ENCODE measurements at regions of chr3 and their contacts with region 1.

Region 1: GRCh38 chr3:73432023-73432705 is 192.6 kb downstream of the PDZRN3 start:
- DNase-seq: peak; percentile 28
- H3K4me3 ChIP-seq: no peak overlapping the region
- H3K27ac ChIP-seq: no peak overlapping the region
- H3K4me1 ChIP-seq: no peaks in the 10 kb centered on the region
- H3K27me3 ChIP-seq: no peaks in the 10 kb centered on the region
- CTCF ChIP-seq: peak; percentile 55 to 64

Region 2: GRCh38 chr3:73094125-73094524 is 338.0 kb before region 1 on chr3:
- CTCF ChIA-PET with region 1: no interaction called
- dilution Hi-C with region 1: no loop called
- in situ Hi-C with region 1: loop called in 1 of 2 experiments (anchors 10 kb)
- intact Hi-C with region 1: no loop called
- DNase-seq: peak; percentile 64
- H3K4me3 ChIP-seq: no peak overlapping the region
- H3K27ac ChIP-seq: no peak overlapping the region
- H3K4me1 ChIP-seq: peaks cover 11% of the 10 kb centered on the region
- H3K27me3 ChIP-seq: no peaks in the 10 kb centered on the region
- CTCF ChIP-seq: peak; percentile 50 to 66

Region 3: DNA sequence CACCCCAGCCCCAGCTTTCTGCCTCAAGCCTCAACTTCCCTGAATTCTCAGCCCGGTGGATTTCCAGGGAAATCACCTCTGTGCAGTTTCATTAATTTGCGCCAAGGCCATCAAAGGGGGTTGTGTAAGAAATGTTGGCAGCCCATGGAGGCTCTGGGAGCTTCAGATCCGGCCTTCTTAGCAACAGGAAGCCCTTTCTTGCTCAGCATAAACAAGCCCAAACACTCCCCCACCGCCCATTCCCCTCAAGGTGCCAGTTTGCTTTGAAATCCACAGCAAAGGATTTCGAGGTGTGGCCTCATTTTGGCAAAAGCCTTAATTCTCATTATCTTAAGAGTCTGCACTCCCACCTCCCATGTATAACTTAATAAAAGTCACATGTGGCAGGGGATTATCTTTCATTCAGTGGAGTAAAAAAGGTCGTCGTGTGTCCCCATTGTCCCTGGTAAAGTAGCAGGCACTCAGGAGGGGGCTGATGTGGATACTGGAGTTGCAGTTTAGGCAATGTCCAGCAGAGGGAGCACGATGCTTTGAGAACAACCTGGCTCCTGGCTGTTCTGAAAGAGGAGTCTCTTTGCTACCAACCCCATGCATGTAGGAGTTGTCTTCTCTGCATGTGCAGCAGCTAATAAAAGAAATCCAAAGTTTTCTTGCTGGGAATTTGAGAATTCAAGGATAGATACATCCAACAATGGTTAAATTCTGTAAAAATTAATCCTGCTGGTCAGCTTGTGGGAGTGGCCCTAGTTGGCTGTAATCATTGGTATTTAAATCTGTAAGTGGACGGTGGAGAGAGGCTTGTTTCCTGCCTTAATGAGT is 331.2 kb before region 1 on chr3:
- CTCF ChIA-PET with region 1: no interaction called
- dilution Hi-C with region 1: no loop called
- in situ Hi-C with region 1: loop called (anchors 10 kb)
- intact Hi-C with region 1: loop called (anchors 1 kb)
- DNase-seq: peak; percentile 61
- H3K4me3 ChIP-seq: no peak overlapping the region
- H3K27ac ChIP-seq: no peak overlapping the region
- H3K4me1 ChIP-seq: no peaks in the 10 kb centered on the region
- H3K27me3 ChIP-seq: no peaks in the 10 kb centered on the region
- CTCF ChIP-seq: peak; percentile 94 to 95

Region 4: GRCh38 chr3:73192035-73192738 is 240.0 kb before region 1 on chr3:
- CTCF ChIA-PET with region 1: no interaction called
- dilution Hi-C with region 1: no loop called
- in situ Hi-C with region 1: no loop called
- intact Hi-C with region 1: loop called (anchors 1 kb)
- DNase-seq: no peak
- H3K4me3 ChIP-seq: no peak overlapping the region
- H3K27ac ChIP-seq: no peak overlapping the region
- H3K4me1 ChIP-seq: no peaks in the 10 kb centered on the region
- H3K27me3 ChIP-seq: no peaks in the 10 kb centered on the region
- CTCF ChIP-seq: peak; percentile 11 to 32

Region 5: GRCh38 chr3:73915886-73916285 is 483.7 kb after region 1 on chr3:
- CTCF ChIA-PET with region 1: no interaction called
- dilution Hi-C with region 1: no loop called
- in situ Hi-C with region 1: no loop called
- intact Hi-C with region 1: no loop called
- DNase-seq: no peak
- H3K4me3 ChIP-seq: no peak overlapping the region
- H3K27ac ChIP-seq: no peak overlapping the region
- H3K4me1 ChIP-seq: no peaks in the 10 kb centered on the region
- H3K27me3 ChIP-seq: no peaks in the 10 kb centered on the region
- CTCF ChIP-seq: no peak

Measured in mammary epithelial cell (primary cell).